K562 (cell line): ENCODE measurements at regions of chr4 and their contacts with region 1.

Region 1: DNA sequence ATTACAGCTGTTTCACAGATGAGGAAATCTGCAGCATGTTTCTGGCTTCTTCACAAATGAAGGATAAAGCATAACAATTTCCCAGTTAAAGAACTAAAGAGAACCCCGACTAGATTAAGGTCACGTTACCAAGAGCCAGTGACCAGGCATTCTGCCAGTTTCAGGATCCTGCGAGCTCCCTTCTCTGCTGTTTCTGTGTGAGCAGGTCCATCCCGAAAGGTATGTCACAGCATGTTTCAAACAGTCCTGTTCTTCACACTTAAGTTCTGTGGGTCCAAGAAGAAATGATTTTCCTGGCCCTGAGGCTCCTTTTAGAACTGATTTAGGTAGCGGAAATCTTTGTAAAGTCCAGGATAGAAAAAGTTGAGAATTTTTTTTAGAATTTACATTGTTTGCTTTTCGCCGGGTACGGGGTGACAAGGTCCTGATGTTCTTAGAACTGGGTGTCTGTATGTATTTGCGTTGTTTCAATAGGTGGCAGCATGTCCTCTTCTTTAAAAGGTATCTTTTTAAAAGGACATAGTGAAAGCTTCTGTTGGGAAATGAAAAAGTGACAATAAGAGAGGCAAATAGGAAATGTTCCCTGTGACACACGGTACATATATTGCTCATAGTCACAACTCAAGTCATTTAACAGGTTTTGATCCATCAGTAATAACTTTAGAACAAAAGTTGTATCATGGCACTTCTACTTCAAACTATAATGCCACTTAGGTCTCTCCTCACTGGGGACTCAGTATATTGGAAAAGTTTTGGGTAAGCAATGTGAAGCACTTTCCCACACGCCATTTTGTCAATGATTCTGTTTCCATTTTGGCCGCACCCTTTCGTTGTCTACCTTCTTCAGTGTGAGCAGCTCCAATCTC is 18.4 kb downstream of the IL21 start:
- DNase-seq: peak; percentile 16 to 77 (median 40)
- ATAC-seq: peak; percentile 93
- H3K4me3 ChIP-seq: no peak overlapping the region; the same call in 1 of the 2 replicates
- H3K27ac ChIP-seq: peak overlapping the region; percentile 61
- H3K4me1 ChIP-seq: peaks cover 0 to 21% of the 10 kb centered on the region in 2 experiments; a peak in 4 of 5 replicates
- H3K27me3 ChIP-seq: no peaks in the 10 kb centered on the region
- CTCF ChIP-seq: peak; percentile 51 to 76 (median 57); a peak in 4 of 6 replicates
- EP300 ChIP-seq: peak; percentile 3; the same call in 1 of the 2 replicates
- POLR2A ChIP-seq: no peak
- RAD21 ChIP-seq: peak; percentile 81 to 88

Region 2: GRCh38 chr4:122710434-122711308 is 108.2 kb after region 1 on chr4:
- CTCF ChIA-PET with region 1: interaction called, 19 read pairs
- POLR2A ChIA-PET with region 1: no interaction called
- in situ Hi-C with region 1: loop called (anchors 5 kb)
- intact Hi-C with region 1: no loop called
- DNase-seq: no peak
- ATAC-seq: peak; percentile 34
- H3K4me3 ChIP-seq: no peak overlapping the region
- H3K27ac ChIP-seq: no peak overlapping the region
- H3K4me1 ChIP-seq: peaks cover 4 to 29% of the 10 kb centered on the region in 2 experiments
- H3K27me3 ChIP-seq: no peaks in the 10 kb centered on the region; a peak in 1 of 5 replicates
- CTCF ChIP-seq: no peak
- EP300 ChIP-seq: no peak
- POLR2A ChIP-seq: no peak
- RAD21 ChIP-seq: no peak

Region 3: GRCh38 chr4:122732329-122733026 is 130.0 kb after region 1 on chr4 and contains the start of gene BBS12:
- CTCF ChIA-PET with region 1: interaction called, 3 read pairs
- POLR2A ChIA-PET with region 1: interaction called, 5 read pairs
- in situ Hi-C with region 1: no loop called
- intact Hi-C with region 1: loop called (anchors 5 kb)
- DNase-seq: peak; percentile 95 to 100 (median 97)
- ATAC-seq: peak; percentile 98
- H3K4me3 ChIP-seq: peak within 1 kb of the TSS; percentile 66
- H3K27ac ChIP-seq: peak within 1 kb of the TSS; percentile 73
- H3K4me1 ChIP-seq: peaks cover 4% of the 10 kb centered on the region in 2 experiments; a peak in 3 of 5 replicates
- H3K27me3 ChIP-seq: no peaks in the 10 kb centered on the region
- CTCF ChIP-seq: peak; percentile 61 to 76 (median 65)
- EP300 ChIP-seq: peak; percentile 29; the same call in 1 of the 2 replicates
- POLR2A ChIP-seq: peak; percentile 55; the same call in 1 of the 2 replicates
- RAD21 ChIP-seq: peak; percentile 59 to 64
- polyA plus RNA-seq, gene BBS12: 5.1 to 6.5 TPM

Region 4: GRCh38 chr4:122827879-122828601 is 225.5 kb after region 1 on chr4:
- CTCF ChIA-PET with region 1: no interaction called
- POLR2A ChIA-PET with region 1: no interaction called
- in situ Hi-C with region 1: no loop called
- intact Hi-C with region 1: loop called (anchors 5 kb)
- DNase-seq: peak; percentile 47 to 67 (median 56)
- ATAC-seq: peak; percentile 74
- H3K4me3 ChIP-seq: peak overlapping the region; percentile 70
- H3K27ac ChIP-seq: peak overlapping the region; percentile 73
- H3K4me1 ChIP-seq: peaks cover 8 to 16% of the 10 kb centered on the region in 2 experiments; a peak in 4 of 5 replicates
- H3K27me3 ChIP-seq: no peaks in the 10 kb centered on the region
- CTCF ChIP-seq: no peak; a peak in 1 of 6 replicates
- EP300 ChIP-seq: no peak
- POLR2A ChIP-seq: no peak; the same call in 1 of the 2 replicates
- RAD21 ChIP-seq: no peak

Region 5: DNA sequence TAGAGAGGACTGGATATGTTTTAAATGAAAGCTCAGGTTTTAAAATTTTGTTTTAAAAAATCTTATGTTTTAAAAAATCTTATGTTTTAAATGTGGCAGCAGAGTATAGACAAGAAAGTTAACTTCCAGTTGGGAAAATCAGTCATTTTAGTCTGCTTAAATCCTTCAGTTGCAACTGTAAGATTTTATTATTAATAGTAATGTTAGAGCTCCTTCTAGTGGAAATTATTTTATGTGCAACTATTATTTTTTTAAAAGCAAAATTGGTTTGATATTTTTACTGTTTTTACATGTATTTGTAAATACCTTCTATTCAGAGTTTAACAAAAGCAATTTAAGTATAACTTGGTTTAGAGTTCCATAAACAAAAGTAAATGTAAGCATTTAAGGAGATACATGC is 328.4 kb after region 1 on chr4:
- CTCF ChIA-PET with region 1: interaction called, 4 read pairs
- POLR2A ChIA-PET with region 1: interaction called, 3 read pairs
- in situ Hi-C with region 1: loop called (anchors 5 kb)
- intact Hi-C with region 1: loop called (anchors 1 kb)
- DNase-seq: no peak
- ATAC-seq: no peak
- H3K4me3 ChIP-seq: no peak overlapping the region
- H3K27ac ChIP-seq: no peak overlapping the region
- H3K4me1 ChIP-seq: peaks cover 0 to 6% of the 10 kb centered on the region in 2 experiments; a peak in 4 of 5 replicates
- H3K27me3 ChIP-seq: no peaks in the 10 kb centered on the region
- CTCF ChIP-seq: peak in 1 of 3 experiments; percentile 70; a peak in 4 of 6 replicates
- EP300 ChIP-seq: no peak
- POLR2A ChIP-seq: no peak
- RAD21 ChIP-seq: peak; percentile 50 to 57

Region 6: GRCh38 chr4:123350191-123350544 is 747.7 kb after region 1 on chr4:
- CTCF ChIA-PET with region 1: no interaction called
- POLR2A ChIA-PET with region 1: no interaction called
- in situ Hi-C with region 1: no loop called
- intact Hi-C with region 1: loop called (anchors 1 kb)
- DNase-seq: peak; percentile 75 to 89 (median 78)
- ATAC-seq: peak; percentile 89
- H3K4me3 ChIP-seq: no peak overlapping the region
- H3K27ac ChIP-seq: peak overlapping the region; percentile 45; the same call in 1 of the 3 replicates
- H3K4me1 ChIP-seq: peaks cover 16 to 24% of the 10 kb centered on the region in 2 experiments
- H3K27me3 ChIP-seq: no peaks in the 10 kb centered on the region
- CTCF ChIP-seq: peak; percentile 67 to 76 (median 74)
- EP300 ChIP-seq: peak; percentile 67
- POLR2A ChIP-seq: no peak
- RAD21 ChIP-seq: peak; percentile 75 to 89

Region 7: GRCh38 chr4:124262211-124263179 is 1660.0 kb after region 1 on chr4:
- CTCF ChIA-PET with region 1: no interaction called
- POLR2A ChIA-PET with region 1: no interaction called
- in situ Hi-C with region 1: no loop called
- intact Hi-C with region 1: loop called (anchors 5 kb)
- DNase-seq: peak; percentile 54 to 77 (median 59)
- ATAC-seq: peak; percentile 94
- H3K4me3 ChIP-seq: no peak overlapping the region
- H3K27ac ChIP-seq: no peak overlapping the region
- H3K4me1 ChIP-seq: no peaks in the 10 kb centered on the region
- H3K27me3 ChIP-seq: no peaks in the 10 kb centered on the region
- CTCF ChIP-seq: peak; percentile 65 to 70 (median 70)
- EP300 ChIP-seq: no peak
- POLR2A ChIP-seq: no peak
- RAD21 ChIP-seq: peak; percentile 74 to 81